Calu3 (cell line): ENCODE measurements at regions of chr6 and their contacts with region 1.

Region 1: DNA sequence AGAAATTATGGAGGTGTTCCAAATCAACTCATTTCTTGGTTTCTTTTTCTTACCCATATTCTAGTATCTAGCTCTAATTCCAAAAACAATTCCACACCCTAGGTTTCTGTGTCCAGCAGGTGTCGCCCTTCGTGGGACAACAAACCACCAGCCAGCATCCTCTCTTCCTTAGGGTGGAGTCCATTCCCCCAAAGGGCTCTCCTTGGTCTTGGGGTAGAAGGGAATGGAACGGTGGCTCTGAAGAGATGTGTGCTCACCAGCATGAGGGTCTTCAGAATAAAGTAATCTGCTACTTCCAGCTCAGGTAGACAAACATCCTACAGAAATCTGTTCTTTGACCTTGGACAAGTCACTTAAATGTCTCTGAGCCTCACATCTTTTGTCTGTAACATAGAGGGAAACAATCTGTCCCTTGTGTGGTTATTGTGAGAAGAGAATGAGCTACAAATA is 7.2 kb downstream of the HLA-DMB start:
- DNase-seq: peak; percentile 86
- H3K4me3 Mint-ChIP-seq: no peak overlapping the region
- H3K27ac Mint-ChIP-seq: no peak overlapping the region
- H3K4me1 Mint-ChIP-seq: peaks cover 10% of the 10 kb centered on the region
- H3K27me3 Mint-ChIP-seq: no peaks in the 10 kb centered on the region
- CTCF ChIP-seq: peak; percentile 87

Region 2: DNA sequence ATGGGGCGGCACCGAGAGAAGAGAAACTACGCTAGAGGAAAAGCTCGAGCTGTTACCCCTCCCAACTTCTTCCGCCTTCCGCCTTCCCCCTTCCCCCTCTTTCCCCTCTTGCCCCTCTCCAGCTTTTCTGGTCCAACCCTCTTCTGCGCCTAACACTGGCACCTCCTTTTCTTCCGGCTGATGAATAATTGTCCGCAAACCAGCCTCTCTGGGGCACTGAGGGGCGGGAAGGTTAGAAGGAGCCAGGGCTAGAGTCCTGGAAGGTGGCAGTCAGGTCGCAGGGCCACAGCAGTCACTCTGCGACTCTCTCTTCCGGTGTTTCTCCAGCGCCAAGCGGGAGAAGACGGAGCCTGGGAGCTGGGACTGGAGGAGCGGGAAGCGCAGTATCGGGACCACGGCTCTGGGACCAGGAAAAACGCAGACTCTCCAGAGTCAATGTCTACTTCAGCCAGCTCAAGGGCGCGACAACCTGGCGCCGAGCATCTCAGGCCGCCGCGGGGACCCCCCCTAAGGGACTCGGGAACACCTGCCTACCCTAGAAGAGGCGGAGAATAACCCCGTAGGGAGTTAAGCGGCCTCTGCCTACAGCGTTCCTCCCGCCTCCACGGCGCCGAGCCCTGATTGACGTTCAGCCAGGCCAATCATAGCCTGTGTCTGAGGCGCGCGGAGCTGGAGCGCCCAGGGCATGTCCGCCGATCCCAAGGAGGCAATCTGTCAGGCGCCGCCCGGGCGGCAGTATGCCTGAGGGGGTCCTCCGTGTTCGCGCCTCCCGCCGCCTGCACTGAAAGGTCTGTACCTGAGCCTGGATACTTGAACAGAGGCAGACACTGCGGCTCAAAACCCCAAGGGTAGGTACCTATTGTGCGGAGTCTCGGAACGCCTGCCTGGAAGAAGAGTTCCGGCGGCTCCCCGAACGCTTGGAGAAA is 39.3 kb before region 1 on chr6:
- CTCF ChIA-PET with region 1: interaction called, 19 read pairs
- intact Hi-C with region 1: no loop called
- DNase-seq: peak; percentile 99
- H3K4me3 Mint-ChIP-seq: peak overlapping the region; percentile 88
- H3K27ac Mint-ChIP-seq: peak overlapping the region; percentile 97
- H3K4me1 Mint-ChIP-seq: peaks cover 38% of the 10 kb centered on the region
- H3K27me3 Mint-ChIP-seq: no peaks in the 10 kb centered on the region
- CTCF ChIP-seq: peak; percentile 37

Region 3: DNA sequence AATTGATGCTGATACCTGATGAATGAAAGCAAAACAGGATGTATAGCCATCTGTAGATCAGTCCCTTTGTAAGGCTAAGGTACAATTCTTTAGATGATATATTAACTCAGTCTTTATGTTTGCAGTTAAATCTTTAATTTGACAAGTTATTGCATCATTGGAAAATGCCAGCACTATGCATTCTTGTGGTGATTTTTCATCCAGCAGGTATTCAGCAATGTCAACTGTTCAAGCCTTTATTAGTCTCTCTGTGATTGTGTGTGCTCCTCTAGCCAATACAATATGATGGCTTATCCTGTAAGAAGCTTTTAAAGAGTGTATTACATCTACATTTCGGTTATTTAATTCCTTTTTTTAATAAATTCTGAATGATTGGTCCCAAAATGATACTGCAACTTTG is 27.1 kb before region 1 on chr6:
- CTCF ChIA-PET with region 1: interaction called, 25 read pairs
- intact Hi-C with region 1: no loop called
- DNase-seq: peak; percentile 34
- H3K4me3 Mint-ChIP-seq: no peak overlapping the region
- H3K27ac Mint-ChIP-seq: peak overlapping the region; percentile 89
- H3K4me1 Mint-ChIP-seq: peaks cover 68% of the 10 kb centered on the region
- H3K27me3 Mint-ChIP-seq: no peaks in the 10 kb centered on the region
- CTCF ChIP-seq: no peak

Region 4: DNA sequence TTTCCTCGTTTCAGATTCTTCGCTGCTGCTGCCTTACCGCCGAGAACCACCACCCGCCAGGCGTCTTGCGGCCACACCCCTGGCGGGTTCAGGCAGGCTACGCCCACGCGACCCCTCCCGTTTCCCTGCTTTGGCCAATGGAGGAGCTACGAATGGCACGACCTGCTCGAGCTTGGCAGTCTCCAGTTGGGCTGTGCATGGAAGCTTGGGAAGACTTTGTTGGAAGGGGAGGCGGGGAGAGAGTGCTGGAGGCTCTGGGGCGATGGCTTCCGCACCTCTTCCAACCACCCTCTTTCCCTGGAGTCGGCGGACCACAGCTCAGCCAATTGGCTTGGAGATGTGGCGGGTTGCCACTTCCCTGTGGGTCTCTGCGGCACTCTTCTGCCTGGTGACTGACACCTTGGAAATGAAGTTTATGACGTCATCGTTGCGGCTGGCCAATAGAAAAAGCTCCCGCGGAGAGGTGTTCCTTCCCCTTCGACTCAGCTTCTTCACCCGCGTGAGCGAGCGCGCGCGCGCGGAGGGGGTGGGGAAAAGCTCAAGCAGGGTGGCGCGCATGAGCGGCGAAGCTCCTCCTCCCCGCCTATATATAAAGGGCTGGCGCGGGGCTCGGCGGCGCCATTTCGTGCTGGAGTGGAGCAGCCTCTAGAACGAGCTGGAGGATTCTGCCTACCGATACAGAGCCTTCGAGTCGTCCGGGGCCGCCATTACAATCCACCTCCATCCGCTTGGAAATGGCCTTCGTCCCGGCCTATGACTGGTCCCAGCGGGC is 38.1 kb after region 1 on chr6:
- CTCF ChIA-PET with region 1: interaction called, 15 read pairs
- intact Hi-C with region 1: no loop called
- DNase-seq: peak; percentile 100
- H3K4me3 Mint-ChIP-seq: peak overlapping the region; percentile 77
- H3K27ac Mint-ChIP-seq: peak overlapping the region; percentile 85
- H3K4me1 Mint-ChIP-seq: peaks cover 33% of the 10 kb centered on the region
- H3K27me3 Mint-ChIP-seq: no peaks in the 10 kb centered on the region
- CTCF ChIP-seq: no peak